ENCODE measurements at regions of chr1 and their contacts with region 1.

Region 1: DNA sequence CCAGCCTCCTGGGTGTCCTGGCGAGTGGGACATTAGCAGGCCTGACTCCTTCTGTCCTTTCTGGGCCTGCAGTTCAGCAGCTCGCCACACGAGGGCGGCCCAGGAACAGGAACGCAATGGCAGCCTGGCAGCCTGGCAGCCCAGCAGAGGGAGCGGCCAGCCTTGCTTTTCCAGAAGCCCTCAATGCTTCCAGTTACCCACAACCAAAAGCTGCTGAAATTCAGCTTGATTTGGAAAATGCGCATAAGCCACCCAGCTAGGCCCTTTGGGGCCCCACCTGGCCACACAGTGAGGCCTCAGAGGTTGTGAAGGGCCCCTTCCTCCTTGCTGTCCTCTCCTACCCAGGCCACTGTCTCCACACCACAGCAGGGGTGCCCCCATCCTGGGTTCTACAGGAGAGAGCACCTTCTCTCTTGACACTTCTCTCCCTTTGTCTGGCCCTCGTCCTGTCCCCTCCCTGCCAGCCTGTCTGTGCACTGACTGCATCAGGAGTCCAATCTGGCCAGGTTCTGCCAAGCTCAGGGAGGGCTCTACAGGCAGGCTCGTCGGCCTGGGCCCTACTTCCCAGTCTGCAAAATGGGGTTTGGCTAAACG is 103.4 kb upstream of the VAMP3 start:
- DNase-seq: peak; percentile 88
- H3K4me3 Mint-ChIP-seq: no peak overlapping the region
- H3K27ac Mint-ChIP-seq: no peak overlapping the region
- H3K4me1 Mint-ChIP-seq: peaks cover 9% of the 10 kb centered on the region
- H3K27me3 Mint-ChIP-seq: peaks cover 33% of the 10 kb centered on the region
- CTCF ChIP-seq: peak; percentile 91

Region 2: DNA sequence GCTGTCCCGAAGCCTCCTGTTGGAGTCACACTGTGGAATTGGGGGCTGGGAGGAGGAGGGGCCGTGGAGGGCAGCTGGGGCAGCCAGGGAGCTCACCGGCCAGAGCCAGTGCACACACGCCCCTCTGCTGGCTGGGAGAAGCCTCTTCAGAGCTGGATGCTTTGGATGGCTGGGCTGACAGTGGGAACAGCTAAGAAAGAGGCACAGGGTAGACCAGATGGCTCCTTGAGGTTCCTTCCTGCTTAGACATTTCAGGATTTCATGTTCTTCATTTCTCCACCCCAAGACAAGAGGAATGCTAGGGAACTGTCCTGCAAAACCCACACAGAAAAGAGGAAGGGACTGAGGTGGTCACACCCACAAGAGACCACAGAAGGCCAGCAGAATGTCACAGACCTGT is 151.4 kb before region 1 on chr1:
- CTCF ChIA-PET with region 1: no interaction called
- intact Hi-C with region 1: no loop called
- DNase-seq: no peak
- H3K4me3 Mint-ChIP-seq: no peak overlapping the region
- H3K27ac Mint-ChIP-seq: no peak overlapping the region
- H3K4me1 Mint-ChIP-seq: no peaks in the 10 kb centered on the region
- H3K27me3 Mint-ChIP-seq: peaks cover 68% of the 10 kb centered on the region
- CTCF ChIP-seq: no peak

Region 3: GRCh38 chr1:7752512-7753417 is 85.0 kb after region 1 on chr1:
- CTCF ChIA-PET with region 1: interaction called, 50 read pairs
- intact Hi-C with region 1: loop called (anchors 1 kb)
- DNase-seq: peak; percentile 51
- H3K4me3 Mint-ChIP-seq: no peak overlapping the region
- H3K27ac Mint-ChIP-seq: no peak overlapping the region
- H3K4me1 Mint-ChIP-seq: no peaks in the 10 kb centered on the region
- H3K27me3 Mint-ChIP-seq: no peaks in the 10 kb centered on the region
- CTCF ChIP-seq: no peak

Region 4: GRCh38 chr1:7902478-7903085 is 234.9 kb after region 1 on chr1:
- CTCF ChIA-PET with region 1: no interaction called
- intact Hi-C with region 1: loop called (anchors 2 kb)
- DNase-seq: peak; percentile 69
- H3K4me3 Mint-ChIP-seq: no peak overlapping the region
- H3K27ac Mint-ChIP-seq: no peak overlapping the region
- H3K4me1 Mint-ChIP-seq: no peaks in the 10 kb centered on the region
- H3K27me3 Mint-ChIP-seq: peaks cover 12% of the 10 kb centered on the region
- CTCF ChIP-seq: peak; percentile 52